ENCODE measurements at regions of chr2 and their contacts with region 1.

Region 1: DNA sequence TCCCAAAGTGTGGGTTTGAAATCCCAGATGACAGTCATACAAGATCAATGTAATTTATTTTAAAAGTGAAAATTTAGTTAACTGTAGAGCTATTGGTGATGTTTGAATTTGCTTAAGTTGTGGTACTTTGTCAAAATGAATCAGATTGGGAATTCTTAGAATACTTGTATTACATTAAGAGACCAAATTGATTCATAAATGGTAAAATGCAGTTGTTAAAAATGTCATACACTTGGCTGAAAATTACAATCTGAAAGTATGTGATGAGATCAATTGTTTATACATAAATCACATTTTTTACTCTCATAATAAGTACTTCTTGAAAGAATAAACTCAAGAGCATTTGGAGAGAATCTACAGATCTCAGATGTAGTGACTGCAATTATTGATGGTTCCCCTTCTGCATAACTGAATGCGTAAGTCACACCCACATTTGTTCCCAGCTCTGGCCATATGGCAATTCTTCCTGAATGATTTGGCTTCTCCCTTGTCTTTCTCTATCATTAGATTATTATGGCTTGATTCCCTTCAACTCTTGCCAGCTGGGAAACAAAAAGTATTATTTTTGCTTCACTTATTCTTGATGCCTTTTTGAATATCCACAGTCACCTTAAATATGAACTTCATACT is 558.5 kb downstream of the CPS1 start:
- DNase-seq: no peak
- ATAC-seq: no peak
- H3K4me3 ChIP-seq: no peak overlapping the region
- H3K27ac ChIP-seq: no peak overlapping the region
- H3K4me1 ChIP-seq: no peaks in the 10 kb centered on the region
- H3K27me3 ChIP-seq: no peaks in the 10 kb centered on the region
- CTCF ChIP-seq: no peak

Region 2: DNA sequence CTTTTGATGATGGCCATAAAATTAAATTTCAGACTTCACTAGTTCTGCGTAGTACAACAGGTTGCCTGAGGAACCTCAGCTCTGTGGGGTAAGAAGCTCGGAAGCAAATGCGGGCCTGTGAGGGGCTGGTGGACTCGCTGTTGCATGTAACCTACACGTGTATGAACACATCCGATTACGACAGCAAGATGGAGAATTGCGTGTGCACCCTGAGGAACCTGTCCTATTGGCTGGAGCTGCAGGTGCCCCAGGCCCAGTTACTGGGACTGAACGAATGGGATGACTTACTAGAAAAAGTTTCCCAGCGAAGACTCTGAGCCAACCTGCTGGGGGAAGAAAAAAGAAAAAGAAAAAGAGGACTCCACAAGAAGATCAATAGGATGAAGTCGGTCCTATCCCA is 1935.3 kb before region 1 on chr2:
- intact Hi-C with region 1: loop called in 1 of 10 experiments (anchors 5 kb)
- DNase-seq: no peak
- ATAC-seq: no peak
- H3K4me3 ChIP-seq: no peak overlapping the region
- H3K27ac ChIP-seq: no peak overlapping the region
- H3K4me1 ChIP-seq: no peaks in the 10 kb centered on the region
- H3K27me3 ChIP-seq: no peaks in the 10 kb centered on the region
- CTCF ChIP-seq: no peak

Region 3: GRCh38 chr2:211085056-211085680 is 29.8 kb before region 1 on chr2:
- intact Hi-C with region 1: loop called in 1 of 10 experiments (anchors 1 kb)
- DNase-seq: no peak
- ATAC-seq: no peak
- H3K4me3 ChIP-seq: no peak overlapping the region
- H3K27ac ChIP-seq: no peak overlapping the region
- H3K4me1 ChIP-seq: no peaks in the 10 kb centered on the region
- H3K27me3 ChIP-seq: no peaks in the 10 kb centered on the region
- CTCF ChIP-seq: peak; percentile 21 to 64 (median 59)

Measured in heart right ventricle (tissue), 16 donors.